ENCODE measurements at regions of chr12 and their contacts with region 1.

Region 1: DNA sequence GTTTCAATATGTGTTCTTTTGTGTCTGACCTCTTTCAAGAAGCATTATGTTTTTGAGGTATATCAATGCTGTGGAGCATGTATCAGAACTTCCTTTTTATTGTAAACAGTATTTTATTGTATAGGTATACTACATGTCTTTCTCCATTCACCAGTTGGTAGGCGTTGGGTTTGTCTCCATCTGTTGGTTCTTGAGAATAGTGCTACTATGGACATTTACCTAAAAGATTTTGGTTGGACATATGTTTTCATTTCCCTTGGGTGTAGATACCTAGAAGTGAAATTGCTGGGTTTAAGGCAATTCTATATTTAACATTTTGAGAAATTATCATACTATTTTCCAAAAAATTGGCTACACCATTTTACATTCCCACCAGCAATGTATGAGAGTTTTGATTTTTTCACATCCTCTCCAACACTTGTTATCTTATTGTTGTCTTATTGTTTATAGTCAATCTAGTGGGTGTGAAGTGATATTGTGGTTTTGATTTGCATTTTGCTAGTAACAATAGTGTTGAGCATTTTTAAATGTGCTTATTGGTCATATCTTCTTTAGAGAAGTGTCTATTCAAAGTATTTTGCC is 409.2 kb downstream of the IPO8 start:
- DNase-seq: no peak
- ATAC-seq: no peak
- H3K4me3 ChIP-seq: no peak overlapping the region
- H3K4me3 Mint-ChIP-seq: no peak overlapping the region
- H3K27ac ChIP-seq: no peak overlapping the region
- H3K27ac Mint-ChIP-seq: no peak overlapping the region
- H3K4me1 ChIP-seq: no peaks in the 10 kb centered on the region
- H3K4me1 Mint-ChIP-seq: no peaks in the 10 kb centered on the region
- H3K27me3 ChIP-seq: no peaks in the 10 kb centered on the region
- H3K27me3 Mint-ChIP-seq: peaks cover 2% of the 10 kb centered on the region
- CTCF ChIP-seq: no peak

Region 2: DNA sequence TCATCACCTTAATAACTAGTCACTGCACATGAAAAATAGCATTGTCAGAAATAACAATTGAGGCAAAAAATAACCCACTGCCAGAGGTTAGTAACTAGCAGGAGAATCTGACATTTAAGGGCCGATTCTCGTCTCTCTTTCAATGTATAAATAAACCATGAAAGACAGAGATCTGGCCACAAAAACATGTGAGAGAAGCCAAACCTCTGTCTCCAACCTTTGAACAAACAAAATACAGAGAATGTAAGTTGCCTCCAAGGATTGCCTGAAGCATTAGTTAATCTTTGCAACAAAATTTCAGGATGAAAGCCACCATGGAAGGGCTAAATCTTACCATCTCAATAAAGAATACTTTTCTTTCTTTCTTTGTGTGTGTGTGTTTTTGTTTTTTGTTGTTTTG is 245.3 kb before region 1 on chr12:
- CTCF ChIA-PET with region 1: no interaction called
- POLR2A ChIA-PET with region 1: no interaction called
- intact Hi-C with region 1: no loop called
- DNase-seq: no peak
- ATAC-seq: no peak
- H3K4me3 ChIP-seq: no peak overlapping the region
- H3K4me3 Mint-ChIP-seq: no peak overlapping the region
- H3K27ac ChIP-seq: no peak overlapping the region
- H3K27ac Mint-ChIP-seq: no peak overlapping the region
- H3K4me1 ChIP-seq: no peaks in the 10 kb centered on the region
- H3K4me1 Mint-ChIP-seq: no peaks in the 10 kb centered on the region
- H3K27me3 ChIP-seq: no peaks in the 10 kb centered on the region
- H3K27me3 Mint-ChIP-seq: no peaks in the 10 kb centered on the region
- CTCF ChIP-seq: no peak

Region 3: DNA sequence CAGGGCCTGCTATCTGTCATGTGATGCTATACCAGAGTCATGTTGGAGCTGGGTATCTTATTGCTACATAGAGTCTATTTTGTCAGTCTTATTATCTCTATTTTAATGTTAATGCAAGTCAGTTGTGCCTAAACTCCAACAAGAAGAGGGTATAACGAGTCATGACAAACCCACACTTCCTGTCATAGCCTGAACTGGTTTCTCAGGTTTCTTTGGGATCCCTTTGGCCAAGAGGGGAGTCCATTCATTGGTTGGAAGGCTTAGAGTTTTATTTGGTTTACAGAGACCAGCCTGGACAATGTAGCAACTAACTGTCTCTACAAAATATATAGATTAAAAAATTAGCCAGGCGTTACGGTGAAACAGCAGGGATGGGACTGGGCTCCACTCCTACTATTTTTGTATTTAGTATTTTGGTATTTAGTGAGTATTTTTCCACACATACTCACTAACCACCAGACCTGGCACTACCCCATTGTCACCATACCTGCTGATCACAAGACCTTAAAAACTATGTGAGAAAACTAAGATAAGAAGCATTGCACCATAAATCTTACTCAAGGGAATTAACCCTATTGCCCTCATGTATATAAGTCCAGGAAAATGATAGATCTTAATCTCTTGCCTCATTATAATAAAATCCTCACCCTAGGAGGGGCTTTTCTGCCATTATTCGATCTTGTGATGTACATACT is 21.7 kb after region 1 on chr12:
- CTCF ChIA-PET with region 1: no interaction called
- POLR2A ChIA-PET with region 1: no interaction called
- intact Hi-C with region 1: loop called in 1 of 2 experiments (anchors 2 kb)
- DNase-seq: no peak
- ATAC-seq: no peak
- H3K4me3 ChIP-seq: no peak overlapping the region
- H3K4me3 Mint-ChIP-seq: no peak overlapping the region
- H3K27ac ChIP-seq: no peak overlapping the region
- H3K27ac Mint-ChIP-seq: no peak overlapping the region
- H3K4me1 ChIP-seq: no peaks in the 10 kb centered on the region
- H3K4me1 Mint-ChIP-seq: no peaks in the 10 kb centered on the region
- H3K27me3 ChIP-seq: no peaks in the 10 kb centered on the region
- H3K27me3 Mint-ChIP-seq: no peaks in the 10 kb centered on the region
- CTCF ChIP-seq: no peak